Caco-2 (cell line): ENCODE measurements at regions of chr2 and their contacts with region 1.

Region 1: GRCh38 chr2:218418717-218419458 is at the start of gene VIL1:
- DNase-seq: peak; percentile 95 to 98
- H3K4me3 ChIP-seq: peak within 1 kb of the TSS; percentile 93
- H3K4me3 Mint-ChIP-seq: peak within 1 kb of the TSS; percentile 90
- H3K27ac Mint-ChIP-seq: peak within 1 kb of the TSS; percentile 88
- H3K4me1 ChIP-seq: peaks cover 42% of the 10 kb centered on the region
- H3K4me1 Mint-ChIP-seq: peaks cover 33% of the 10 kb centered on the region
- H3K27me3 ChIP-seq: no peaks in the 10 kb centered on the region
- H3K27me3 Mint-ChIP-seq: no peaks in the 10 kb centered on the region
- CTCF ChIP-seq: no peak
- total RNA-seq, gene VIL1: 401 and 448 TPM in 2 replicates

Region 2: DNA sequence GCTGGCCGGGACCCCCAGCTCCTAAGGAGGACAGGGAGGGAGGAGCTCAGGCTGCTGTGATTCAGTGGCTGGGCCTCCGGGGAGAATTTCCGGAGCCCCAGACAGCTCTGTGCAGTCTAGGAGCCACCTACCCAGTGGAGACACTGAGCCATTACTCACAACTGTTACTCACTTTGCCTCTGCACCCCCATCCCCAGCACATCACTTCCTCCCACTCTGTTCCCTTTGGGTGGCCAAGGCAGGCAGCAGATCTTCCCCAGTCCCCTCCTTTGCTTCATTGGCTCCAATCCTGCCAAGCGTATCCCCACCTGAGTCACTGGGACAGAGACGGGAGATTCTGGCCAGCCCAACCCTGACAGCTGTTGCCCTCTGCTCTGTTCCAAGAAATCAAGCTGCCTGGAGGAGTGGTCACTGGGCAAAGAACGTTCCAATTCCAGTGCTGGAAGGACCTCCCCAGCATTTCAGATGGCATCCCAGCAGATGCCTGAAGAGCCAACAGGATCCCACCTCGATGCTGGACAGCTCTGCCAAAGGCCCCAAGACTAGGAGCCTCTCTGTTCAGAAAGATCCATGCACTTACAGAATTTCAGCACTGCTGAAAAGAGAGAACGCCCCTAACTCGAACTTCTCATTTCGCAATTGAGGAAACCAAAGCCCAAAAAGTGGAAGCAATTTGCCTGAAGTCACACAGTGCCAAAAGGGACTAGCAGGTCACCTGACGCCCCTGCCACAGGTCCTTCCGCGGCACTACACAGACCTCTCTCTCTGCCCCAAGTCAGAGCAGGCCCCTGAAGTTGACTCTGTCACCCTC is 484.4 kb before region 1 on chr2:
- CTCF ChIA-PET with region 1: no interaction called
- POLR2A ChIA-PET with region 1: no interaction called
- intact Hi-C with region 1: no loop called
- DNase-seq: no peak
- H3K4me3 ChIP-seq: no peak overlapping the region
- H3K4me3 Mint-ChIP-seq: no peak overlapping the region
- H3K27ac Mint-ChIP-seq: no peak overlapping the region
- H3K4me1 ChIP-seq: no peaks in the 10 kb centered on the region
- H3K4me1 Mint-ChIP-seq: no peaks in the 10 kb centered on the region
- H3K27me3 ChIP-seq: no peaks in the 10 kb centered on the region
- H3K27me3 Mint-ChIP-seq: no peaks in the 10 kb centered on the region
- CTCF ChIP-seq: no peak

Region 3: GRCh38 chr2:218431868-218432267 is 13.0 kb after region 1 on chr2:
- CTCF ChIA-PET with region 1: interaction called, 11 read pairs
- POLR2A ChIA-PET with region 1: interaction called, 5 read pairs
- intact Hi-C with region 1: no loop called
- DNase-seq: peak in 1 of 2 experiments; percentile 22
- H3K4me3 ChIP-seq: no peak overlapping the region
- H3K4me3 Mint-ChIP-seq: no peak overlapping the region
- H3K27ac Mint-ChIP-seq: no peak overlapping the region
- H3K4me1 ChIP-seq: no peaks in the 10 kb centered on the region
- H3K4me1 Mint-ChIP-seq: peaks cover 6% of the 10 kb centered on the region
- H3K27me3 ChIP-seq: no peaks in the 10 kb centered on the region
- H3K27me3 Mint-ChIP-seq: no peaks in the 10 kb centered on the region
- CTCF ChIP-seq: no peak

Region 4: DNA sequence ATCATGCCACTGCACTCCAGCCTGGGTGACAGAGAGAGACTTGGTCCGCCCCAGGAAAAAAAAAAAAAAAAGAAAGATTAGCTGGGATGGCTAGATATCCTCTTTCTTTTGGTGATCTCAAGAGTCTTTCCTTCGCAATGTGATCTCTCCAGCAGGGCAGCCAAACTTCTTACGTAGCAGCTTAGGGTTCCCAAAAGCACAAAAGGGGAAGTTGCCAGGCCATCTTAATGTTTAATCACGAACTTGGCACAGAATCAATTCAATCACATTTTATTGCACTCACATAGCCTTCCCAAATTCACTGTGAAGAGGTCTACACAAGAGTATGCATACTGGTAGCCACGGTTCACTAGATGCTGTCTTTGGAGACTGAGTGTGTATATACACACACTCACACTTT is 53.1 kb after region 1 on chr2:
- CTCF ChIA-PET with region 1: no interaction called
- POLR2A ChIA-PET with region 1: no interaction called
- intact Hi-C with region 1: no loop called
- DNase-seq: no peak
- H3K4me3 ChIP-seq: no peak overlapping the region
- H3K4me3 Mint-ChIP-seq: no peak overlapping the region
- H3K27ac Mint-ChIP-seq: no peak overlapping the region
- H3K4me1 ChIP-seq: no peaks in the 10 kb centered on the region
- H3K4me1 Mint-ChIP-seq: no peaks in the 10 kb centered on the region
- H3K27me3 ChIP-seq: no peaks in the 10 kb centered on the region
- H3K27me3 Mint-ChIP-seq: no peaks in the 10 kb centered on the region
- CTCF ChIP-seq: no peak